CD4-positive, alpha-beta T cell (primary cell): ENCODE measurements at regions of chr7 and their contacts with region 1.

Region 1: DNA sequence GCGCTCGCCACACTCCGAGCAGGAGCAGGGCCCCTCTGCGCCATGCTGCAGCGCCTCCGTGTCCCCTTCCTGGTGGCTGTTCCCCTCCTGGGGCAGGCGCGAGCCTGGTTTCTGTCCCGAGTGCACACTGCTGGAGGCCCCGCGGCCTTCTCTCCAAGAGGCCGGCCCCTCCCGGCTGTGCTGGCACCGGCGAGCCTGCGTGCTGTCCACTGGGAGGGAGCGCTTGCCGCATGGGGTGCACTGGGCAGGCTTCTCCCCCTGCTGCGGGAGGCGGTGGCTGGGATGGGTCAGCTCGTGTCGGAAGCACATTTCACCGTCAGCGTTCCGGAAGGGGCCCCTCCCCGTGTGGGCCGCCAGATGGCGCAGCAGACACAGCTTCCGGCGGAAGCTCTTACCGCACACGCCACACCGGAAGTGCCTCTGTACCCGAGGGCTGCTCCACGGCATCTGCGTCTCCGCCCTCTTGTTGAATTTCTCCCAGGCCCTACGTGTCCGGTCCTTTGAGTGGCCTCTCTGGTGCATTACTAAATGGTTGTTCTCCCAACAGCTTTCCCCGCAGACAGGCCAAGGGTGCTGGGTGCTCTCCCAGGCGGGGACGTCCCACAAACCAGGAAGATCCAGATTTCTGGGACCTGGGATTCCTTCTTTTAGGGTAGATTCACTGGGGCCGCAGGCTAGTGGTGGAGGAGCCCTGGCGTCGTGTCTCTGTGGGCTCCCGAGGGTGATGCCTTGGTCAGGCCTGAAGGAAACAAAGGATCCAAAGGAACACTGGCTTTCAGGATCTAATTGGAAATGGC is 18.7 kb downstream of the ZNF786 start:
- DNase-seq: peak; percentile 23 to 81 (median 44)
- ATAC-seq: peak; percentile 76
- H3K4me3 ChIP-seq: no peak overlapping the region
- H3K4me3 Mint-ChIP-seq: no peak overlapping the region
- H3K27ac ChIP-seq: peak overlapping the region in 1 of 2 donors; percentile 34
- H3K27ac Mint-ChIP-seq: peak overlapping the region; percentile 43
- H3K4me1 ChIP-seq: peaks cover 11% of the 10 kb centered on the region
- H3K4me1 Mint-ChIP-seq: peaks cover 15% of the 10 kb centered on the region
- H3K27me3 ChIP-seq: no peaks in the 10 kb centered on the region
- H3K27me3 Mint-ChIP-seq: no peaks in the 10 kb centered on the region
- CTCF ChIP-seq: no peak

Region 2: DNA sequence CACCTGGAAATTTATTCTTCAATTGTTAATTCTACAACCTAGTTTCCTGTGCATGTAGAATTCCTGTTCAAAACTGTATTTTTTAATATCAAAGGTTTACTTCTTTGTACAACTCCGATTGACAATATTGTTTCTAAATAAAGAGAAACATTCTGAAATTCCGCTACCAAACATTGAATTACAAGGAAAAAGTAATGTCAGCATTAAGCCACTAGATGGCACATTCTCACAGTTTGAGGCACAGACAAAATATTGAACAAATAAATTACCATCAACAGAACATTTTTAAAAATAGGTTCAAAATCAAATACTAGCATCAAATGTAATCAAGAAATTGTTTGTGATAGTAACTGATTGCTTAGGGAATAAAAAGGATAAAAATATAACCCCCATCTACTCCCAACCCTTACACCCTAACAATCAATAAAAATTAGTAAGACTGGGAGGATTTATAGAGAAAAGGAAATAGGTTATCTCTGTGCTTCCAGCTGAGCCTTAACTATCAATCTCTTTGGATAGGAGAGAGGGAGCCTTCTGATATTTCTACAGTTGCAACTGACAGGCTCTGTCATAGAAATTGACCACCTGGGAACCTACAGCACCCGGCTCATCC is 567.9 kb before region 1 on chr7:
- CTCF ChIA-PET with region 1: no interaction called
- POLR2A ChIA-PET with region 1: no interaction called
- intact Hi-C with region 1: loop called in 1 of 2 experiments (anchors 10 kb)
- DNase-seq: peak in 3 of 14 experiments; percentile 55 to 66 (median 62)
- ATAC-seq: no peak
- H3K4me3 ChIP-seq: no peak overlapping the region
- H3K4me3 Mint-ChIP-seq: no peak overlapping the region
- H3K27ac ChIP-seq: no peak overlapping the region
- H3K27ac Mint-ChIP-seq: no peak overlapping the region
- H3K4me1 ChIP-seq: no peaks in the 10 kb centered on the region
- H3K4me1 Mint-ChIP-seq: peaks cover 7% of the 10 kb centered on the region
- H3K27me3 ChIP-seq: peaks cover 0 to 13% of the 10 kb centered on the region in 2 experiments
- H3K27me3 Mint-ChIP-seq: peaks cover 17% of the 10 kb centered on the region
- CTCF ChIP-seq: peak; percentile 90

Region 3: GRCh38 chr7:149125863-149126661 is 54.2 kb after region 1 on chr7 and contains the start of gene ZNF425:
- CTCF ChIA-PET with region 1: interaction called, 11 read pairs
- POLR2A ChIA-PET with region 1: no interaction called
- intact Hi-C with region 1: no loop called
- DNase-seq: peak; percentile 87 to 96 (median 93)
- ATAC-seq: peak; percentile 83
- H3K4me3 ChIP-seq: peak within 1 kb of the TSS; percentile 100
- H3K4me3 Mint-ChIP-seq: peak within 1 kb of the TSS; percentile 100
- H3K27ac ChIP-seq: peak within 1 kb of the TSS; percentile 79 to 80
- H3K27ac Mint-ChIP-seq: peak within 1 kb of the TSS; percentile 96
- H3K4me1 ChIP-seq: peaks cover 12% of the 10 kb centered on the region
- H3K4me1 Mint-ChIP-seq: peaks cover 24% of the 10 kb centered on the region
- H3K27me3 ChIP-seq: no peaks in the 10 kb centered on the region
- H3K27me3 Mint-ChIP-seq: no peaks in the 10 kb centered on the region
- CTCF ChIP-seq: peak; percentile 94
- total RNA-seq, gene ZNF425: 0.22 to 0.39 TPM

Region 4: GRCh38 chr7:149720372-149721248 is 648.8 kb after region 1 on chr7:
- CTCF ChIA-PET with region 1: no interaction called
- POLR2A ChIA-PET with region 1: no interaction called
- intact Hi-C with region 1: no loop called
- DNase-seq: no peak
- ATAC-seq: no peak
- H3K4me3 ChIP-seq: no peak overlapping the region
- H3K4me3 Mint-ChIP-seq: no peak overlapping the region
- H3K27ac ChIP-seq: no peak overlapping the region
- H3K27ac Mint-ChIP-seq: no peak overlapping the region
- H3K4me1 ChIP-seq: peaks cover 9% of the 10 kb centered on the region
- H3K4me1 Mint-ChIP-seq: peaks cover 14% of the 10 kb centered on the region
- H3K27me3 ChIP-seq: no peaks in the 10 kb centered on the region
- H3K27me3 Mint-ChIP-seq: no peaks in the 10 kb centered on the region
- CTCF ChIP-seq: no peak